ENCODE measurements at regions of chr1 and their contacts with region 1.

Region 1: DNA sequence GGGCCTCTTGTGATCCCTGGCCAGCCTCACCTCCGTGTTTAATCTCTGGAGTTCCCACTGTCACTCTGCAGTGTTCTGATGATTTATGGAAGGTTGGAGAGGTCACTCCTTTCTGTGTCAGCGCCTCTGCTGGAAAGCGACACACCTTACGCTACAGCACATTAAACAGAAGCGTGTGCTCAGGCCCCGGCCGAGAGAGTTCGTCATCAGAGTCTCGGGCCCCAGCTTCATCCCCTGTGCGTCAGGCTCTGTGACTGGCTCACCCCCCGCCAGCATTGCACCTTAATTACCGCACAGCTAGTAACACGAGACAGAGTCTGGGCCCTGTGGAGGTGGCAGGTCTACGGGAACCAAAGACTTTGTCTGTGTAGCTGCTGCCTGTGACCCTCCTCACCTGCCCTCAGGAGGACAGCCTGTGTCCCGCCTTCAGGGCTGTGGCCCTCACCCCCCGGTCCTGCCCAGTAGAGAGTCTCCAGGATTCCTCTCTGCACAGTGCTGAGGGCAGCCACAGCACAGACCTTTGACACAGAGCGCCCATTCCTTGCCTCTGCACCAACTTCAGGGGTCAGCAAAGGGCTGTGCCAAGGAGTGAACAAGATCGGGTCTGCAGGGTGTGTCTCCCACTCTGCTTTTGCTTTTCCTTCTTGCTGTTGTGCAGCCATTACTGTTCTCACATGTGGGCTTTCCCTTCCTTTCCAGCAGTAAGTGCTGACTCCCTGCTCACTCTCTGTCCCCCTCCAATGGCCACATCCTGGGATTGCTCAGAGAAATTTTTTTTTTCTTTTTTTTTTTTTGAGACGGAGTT is 157.6 kb downstream of the PGBD5 start:
- DNase-seq: peak in 1 of 2 donors; percentile 57
- ATAC-seq: peak; percentile 56 to 74 (median 70)
- H3K4me3 ChIP-seq: no peak overlapping the region
- H3K27ac ChIP-seq: peak overlapping the region in 1 of 10 donors; percentile 44
- H3K4me1 ChIP-seq: peaks cover 8 to 34% (median 20%) of the 10 kb centered on the region in 9 donors
- H3K27me3 ChIP-seq: no peaks in the 10 kb centered on the region
- CTCF ChIP-seq: peak; percentile 45 to 75 (median 64)

Region 2: GRCh38 chr1:230231774-230232145 is 36.8 kb before region 1 on chr1:
- intact Hi-C with region 1: loop called in 1 of 10 experiments (anchors 2 kb)
- DNase-seq: peak; percentile 48 to 75
- ATAC-seq: peak in 7 of 8 donors; percentile 74 to 89 (median 81)
- H3K4me3 ChIP-seq: peak overlapping the region in 6 of 10 donors; percentile 10 to 33 (median 17)
- H3K27ac ChIP-seq: peak overlapping the region in 8 of 10 donors; percentile 6 to 78 (median 36)
- H3K4me1 ChIP-seq: peaks cover 7 to 36% (median 21%) of the 10 kb centered on the region in 9 donors
- H3K27me3 ChIP-seq: no peaks in the 10 kb centered on the region
- CTCF ChIP-seq: no peak

Region 3: GRCh38 chr1:230642263-230642959 is 373.8 kb after region 1 on chr1 and contains the start of gene COG2:
- intact Hi-C with region 1: no loop called
- DNase-seq: peak; percentile 92 to 97
- ATAC-seq: peak; percentile 98 to 100 (median 99)
- H3K4me3 ChIP-seq: peak within 1 kb of the TSS; percentile 44 to 93 (median 78)
- H3K27ac ChIP-seq: peak within 1 kb of the TSS in 9 of 10 donors; percentile 56 to 94 (median 84)
- H3K4me1 ChIP-seq: peaks cover 9 to 51% (median 34%) of the 10 kb centered on the region in 9 donors
- H3K27me3 ChIP-seq: peaks cover 0 to 9% (median 0%) of the 10 kb centered on the region in 7 donors
- CTCF ChIP-seq: peak; percentile 100
- total RNA-seq, gene COG2: 20.1 to 36.5 (median 24.7) TPM